BJ (cell line): ENCODE measurements at regions of chr14 and their contacts with region 1.

Region 1: DNA sequence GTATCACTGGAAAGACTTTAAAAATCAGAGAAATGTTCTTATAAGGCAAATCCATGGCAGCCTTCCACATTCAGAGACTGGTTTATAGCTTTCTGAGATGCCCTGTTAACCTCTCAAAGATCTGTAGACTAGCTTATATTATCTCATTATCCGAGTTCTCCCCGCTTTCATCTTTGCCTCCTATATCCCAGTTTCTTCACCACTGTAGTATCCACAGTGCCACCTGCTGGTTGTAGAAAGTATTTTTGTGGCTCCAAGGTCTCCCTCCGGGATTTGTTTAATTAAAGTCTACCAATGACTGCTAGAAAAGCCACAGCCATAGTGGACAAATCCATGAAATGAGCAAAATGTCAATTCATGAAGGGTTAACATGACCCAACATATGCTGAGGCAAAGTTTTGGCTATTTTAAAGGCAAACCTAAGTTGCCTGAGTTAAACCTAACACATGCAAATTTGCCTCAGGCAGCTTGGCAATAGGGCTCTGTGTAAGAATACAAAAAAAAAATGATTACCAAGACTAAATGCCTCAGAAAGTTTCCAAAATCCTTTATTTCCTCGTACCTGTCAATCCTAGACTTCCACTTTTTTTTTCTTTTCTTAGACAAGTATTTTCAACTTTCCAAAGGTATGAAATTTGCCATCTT is 218.8 kb upstream of the BMP4 start:
- DNase-seq: no peak
- H3K4me3 ChIP-seq: no peak overlapping the region
- H3K27me3 ChIP-seq: no peaks in the 10 kb centered on the region
- CTCF ChIP-seq: peak; percentile 72

Region 2: GRCh38 chr14:53696217-53696965 is 479.0 kb before region 1 on chr14:
- CTCF ChIA-PET with region 1: no interaction called
- POLR2A ChIA-PET with region 1: no interaction called
- DNase-seq: no peak
- H3K4me3 ChIP-seq: no peak overlapping the region
- H3K27me3 ChIP-seq: peaks cover 3% of the 10 kb centered on the region; the same call in 1 of the 2 replicates
- CTCF ChIP-seq: no peak

Region 3: DNA sequence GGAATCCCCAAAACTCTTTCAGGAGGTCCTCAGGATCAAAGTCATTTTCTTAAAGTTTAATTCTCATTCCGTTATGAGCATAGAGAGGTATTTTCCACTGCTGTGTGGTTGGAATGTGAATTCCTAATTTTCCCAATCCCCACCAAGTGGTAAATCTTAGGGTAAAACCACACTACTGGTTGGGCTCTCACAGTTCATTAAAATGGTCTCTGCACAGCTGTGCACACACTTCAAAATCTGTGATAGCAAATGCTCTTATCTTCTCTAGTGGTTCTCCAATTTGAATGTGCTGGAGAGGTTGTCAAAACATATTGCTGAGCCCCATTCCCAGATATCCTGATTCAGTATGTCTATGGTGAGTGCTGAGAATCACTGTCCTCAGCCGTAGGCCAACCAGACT is 407.9 kb before region 1 on chr14:
- CTCF ChIA-PET with region 1: no interaction called
- POLR2A ChIA-PET with region 1: no interaction called
- DNase-seq: no peak
- H3K4me3 ChIP-seq: no peak overlapping the region
- H3K27me3 ChIP-seq: no peaks in the 10 kb centered on the region
- CTCF ChIP-seq: no peak

Region 4: GRCh38 chr14:54186821-54187763 is 11.7 kb after region 1 on chr14:
- CTCF ChIA-PET with region 1: interaction called, 11 read pairs
- POLR2A ChIA-PET with region 1: interaction called, 4 read pairs
- DNase-seq: no peak
- H3K4me3 ChIP-seq: no peak overlapping the region
- H3K27me3 ChIP-seq: no peaks in the 10 kb centered on the region
- CTCF ChIP-seq: no peak